Activated CD4-positive, alpha-beta memory T cell treated with anti-CD3 and anti-CD28 coated beads for 36 hours (primary cell): ENCODE measurements at regions of chr9 and their contacts with region 1.

Region 1: DNA sequence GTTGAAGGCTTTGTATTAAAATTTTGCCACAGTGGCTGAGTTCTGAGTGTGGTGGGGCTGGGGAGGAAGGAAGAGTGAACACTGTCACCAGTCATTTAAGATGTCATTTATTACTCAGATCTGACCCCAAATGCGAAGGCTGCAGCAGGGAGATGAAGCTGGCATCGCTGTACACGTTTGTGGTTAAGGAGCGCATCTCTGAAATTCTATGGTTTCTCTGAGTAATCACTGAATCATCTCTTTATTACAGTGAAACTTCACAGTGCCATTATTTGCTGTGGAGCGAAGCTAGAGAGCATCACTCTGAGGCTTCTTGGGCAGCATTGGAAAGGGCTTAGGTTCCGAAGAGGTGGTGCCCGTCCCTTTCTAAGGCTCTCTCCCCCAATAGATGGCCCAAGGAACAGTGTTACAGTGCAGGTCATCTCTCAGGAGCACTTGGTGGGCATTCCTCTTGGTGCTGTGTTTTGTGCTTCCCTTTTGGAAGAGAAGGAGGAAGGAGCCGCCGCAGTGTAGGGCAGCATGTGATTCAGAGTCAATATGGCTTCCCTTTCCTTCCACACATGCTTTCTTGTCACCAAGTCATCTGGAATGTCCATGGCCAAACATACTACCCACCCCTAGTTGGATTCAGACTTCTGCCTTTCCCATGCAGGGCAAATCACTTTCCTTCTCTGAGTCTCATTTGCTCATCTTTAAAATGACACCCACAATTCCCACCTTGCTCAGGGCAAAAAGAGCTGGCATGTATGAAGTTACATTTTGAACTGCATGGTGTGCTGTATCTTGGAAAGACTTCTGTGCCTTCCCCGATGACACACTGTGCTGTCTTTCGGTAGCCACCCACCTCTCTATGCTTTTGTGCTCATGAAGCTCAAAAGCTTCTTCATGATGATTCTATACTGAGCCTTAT is 9.3 kb upstream of the TEX48 start:
- DNase-seq: peak; percentile 88
- H3K4me3 Mint-ChIP-seq: peak overlapping the region; percentile 55
- H3K27ac Mint-ChIP-seq: peak overlapping the region; percentile 99
- H3K4me1 Mint-ChIP-seq: peaks cover 87% of the 10 kb centered on the region
- H3K27me3 Mint-ChIP-seq: no peaks in the 10 kb centered on the region

Region 2: GRCh38 chr9:114339130-114339908 is 352.0 kb before region 1 on chr9:
- CTCF ChIA-PET with region 1: no interaction called
- POLR2A ChIA-PET with region 1: no interaction called
- intact Hi-C with region 1: no loop called
- DNase-seq: peak; percentile 71
- H3K4me3 Mint-ChIP-seq: no peak overlapping the region
- H3K27ac Mint-ChIP-seq: peak overlapping the region; percentile 64
- H3K4me1 Mint-ChIP-seq: peaks cover 3% of the 10 kb centered on the region
- H3K27me3 Mint-ChIP-seq: no peaks in the 10 kb centered on the region

Region 3: DNA sequence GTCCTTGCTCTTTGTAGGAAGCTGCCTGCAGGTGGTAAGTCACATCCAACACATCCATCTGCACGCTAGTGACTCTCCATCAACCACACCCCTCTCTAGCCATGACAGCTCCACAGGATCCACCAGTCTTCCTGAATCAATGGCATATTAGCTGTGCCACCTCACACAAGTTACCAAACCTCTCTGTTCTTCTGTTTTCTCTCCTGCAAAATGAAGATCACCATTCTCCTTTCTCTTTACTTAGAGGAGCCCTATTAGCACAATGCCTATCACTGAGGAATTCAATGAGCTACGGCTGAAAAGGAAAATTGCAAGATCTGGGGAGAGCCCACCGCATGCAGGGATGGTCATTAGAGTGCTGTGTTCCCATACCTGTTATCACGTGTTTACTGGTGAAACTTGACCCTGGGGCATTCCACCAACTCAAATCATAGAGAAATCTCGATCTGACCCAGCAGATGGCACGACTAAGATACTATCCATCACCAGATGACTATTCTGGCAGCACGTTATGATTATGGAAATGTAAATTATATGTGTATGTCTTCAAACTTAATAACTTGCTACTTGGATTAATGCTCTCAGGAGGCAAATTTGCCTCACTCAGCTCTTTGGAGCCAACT is 207.0 kb before region 1 on chr9:
- CTCF ChIA-PET with region 1: no interaction called
- POLR2A ChIA-PET with region 1: no interaction called
- intact Hi-C with region 1: no loop called
- DNase-seq: peak; percentile 50
- H3K4me3 Mint-ChIP-seq: no peak overlapping the region
- H3K27ac Mint-ChIP-seq: peak overlapping the region; percentile 81
- H3K4me1 Mint-ChIP-seq: peaks cover 33% of the 10 kb centered on the region
- H3K27me3 Mint-ChIP-seq: no peaks in the 10 kb centered on the region

Region 4: GRCh38 chr9:114709636-114710035 is 18.3 kb after region 1 on chr9:
- CTCF ChIA-PET with region 1: interaction called, 4 read pairs
- POLR2A ChIA-PET with region 1: interaction called, 14 read pairs
- intact Hi-C with region 1: no loop called
- DNase-seq: no peak
- H3K4me3 Mint-ChIP-seq: no peak overlapping the region
- H3K27ac Mint-ChIP-seq: peak overlapping the region; percentile 38
- H3K4me1 Mint-ChIP-seq: peaks cover 36% of the 10 kb centered on the region
- H3K27me3 Mint-ChIP-seq: no peaks in the 10 kb centered on the region

Region 5: DNA sequence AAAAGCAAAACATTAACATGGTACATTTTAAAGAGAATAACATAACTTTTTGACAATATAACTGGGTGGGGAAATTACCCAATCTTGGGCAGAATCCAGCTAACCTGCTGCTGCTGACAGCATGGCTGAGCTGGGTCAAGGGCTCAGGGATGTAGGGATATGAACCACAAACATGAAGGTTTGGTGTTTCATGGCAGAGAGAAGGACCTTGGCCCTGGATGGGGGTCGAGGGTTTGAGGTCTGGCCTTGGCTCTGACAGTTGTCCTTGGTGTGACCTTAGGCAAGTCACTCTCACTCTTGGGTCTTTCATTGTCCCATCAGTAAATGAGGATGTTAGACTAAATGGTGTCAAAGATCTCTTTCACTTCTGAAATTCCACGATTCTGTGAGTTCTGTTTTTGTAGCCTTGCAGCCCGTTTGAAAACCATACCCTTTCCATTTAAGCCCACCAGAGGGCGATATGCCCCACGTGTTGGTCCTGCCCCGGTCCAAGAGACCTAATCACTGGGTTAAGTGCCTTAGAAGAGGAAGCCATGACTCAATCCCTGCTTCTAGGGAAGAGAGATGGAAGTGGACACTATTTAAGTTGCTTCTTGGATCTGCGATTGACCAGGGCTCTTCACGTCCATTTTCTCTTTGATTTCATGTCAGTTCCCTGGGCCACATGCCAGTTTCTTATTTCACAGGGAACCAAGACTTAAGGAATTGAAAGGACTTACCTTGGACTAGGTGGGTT is 47.4 kb after region 1 on chr9:
- CTCF ChIA-PET with region 1: interaction called, 19 read pairs
- POLR2A ChIA-PET with region 1: interaction called, 24 read pairs
- intact Hi-C with region 1: loop called (anchors 2 kb)
- DNase-seq: peak; percentile 81
- H3K4me3 Mint-ChIP-seq: no peak overlapping the region
- H3K27ac Mint-ChIP-seq: peak overlapping the region; percentile 81
- H3K4me1 Mint-ChIP-seq: peaks cover 52% of the 10 kb centered on the region
- H3K27me3 Mint-ChIP-seq: no peaks in the 10 kb centered on the region

Region 6: GRCh38 chr9:114829574-114830440 is 138.5 kb after region 1 on chr9:
- CTCF ChIA-PET with region 1: no interaction called
- POLR2A ChIA-PET with region 1: no interaction called
- intact Hi-C with region 1: loop called (anchors 5 kb)
- DNase-seq: no peak
- H3K4me3 Mint-ChIP-seq: no peak overlapping the region
- H3K27ac Mint-ChIP-seq: no peak overlapping the region
- H3K4me1 Mint-ChIP-seq: peaks cover 13% of the 10 kb centered on the region
- H3K27me3 Mint-ChIP-seq: no peaks in the 10 kb centered on the region

Region 7: DNA sequence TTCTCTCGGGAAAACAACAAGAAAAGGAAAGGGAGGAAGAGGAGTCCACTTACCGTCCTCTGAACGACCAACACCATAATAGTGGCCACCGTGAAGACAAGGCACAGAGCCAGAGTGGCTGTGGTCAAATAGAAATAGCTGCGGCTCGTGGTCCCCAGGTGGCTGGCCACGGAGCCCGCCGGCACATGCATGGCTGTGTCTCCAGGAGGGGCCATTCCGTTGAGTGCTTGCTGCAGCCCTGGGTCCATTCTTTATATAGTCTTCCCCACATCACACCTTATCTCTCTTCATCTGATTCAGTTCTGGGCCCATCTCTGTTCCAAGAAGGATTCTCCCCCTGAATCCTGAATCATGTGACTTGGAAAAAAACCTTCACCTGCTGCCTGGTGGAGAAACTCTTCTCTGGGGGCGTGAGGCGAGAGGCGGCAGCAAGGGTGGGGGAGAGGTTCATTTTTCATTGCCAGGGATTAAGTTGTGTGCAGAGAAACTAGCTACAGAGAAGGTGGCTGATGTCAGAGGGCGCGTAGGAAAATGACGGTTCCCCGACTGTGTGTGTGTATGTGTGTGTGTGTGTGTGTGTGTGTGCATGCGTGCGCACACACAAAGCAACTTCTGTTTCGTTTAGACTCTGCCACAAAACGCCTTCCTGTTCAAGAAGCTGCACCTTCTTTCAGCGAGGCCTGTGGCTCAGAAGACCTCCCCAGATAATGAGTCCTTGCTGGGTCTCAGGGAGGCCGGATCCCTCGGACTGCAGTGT is 238.9 kb after region 1 on chr9 and contains the start of gene TNFSF8:
- CTCF ChIA-PET with region 1: interaction called, 3 read pairs
- POLR2A ChIA-PET with region 1: interaction called, 28 read pairs
- intact Hi-C with region 1: no loop called
- DNase-seq: peak; percentile 90
- H3K4me3 Mint-ChIP-seq: peak within 1 kb of the TSS; percentile 94
- H3K27ac Mint-ChIP-seq: peak within 1 kb of the TSS; percentile 97
- H3K4me1 Mint-ChIP-seq: peaks cover 44% of the 10 kb centered on the region
- H3K27me3 Mint-ChIP-seq: no peaks in the 10 kb centered on the region
- total RNA-seq, gene TNFSF8: 37.9 to 38.7 TPM